HEK293 (cell line): ENCODE measurements at regions of chr19 and their contacts with region 1.

Region 1: DNA sequence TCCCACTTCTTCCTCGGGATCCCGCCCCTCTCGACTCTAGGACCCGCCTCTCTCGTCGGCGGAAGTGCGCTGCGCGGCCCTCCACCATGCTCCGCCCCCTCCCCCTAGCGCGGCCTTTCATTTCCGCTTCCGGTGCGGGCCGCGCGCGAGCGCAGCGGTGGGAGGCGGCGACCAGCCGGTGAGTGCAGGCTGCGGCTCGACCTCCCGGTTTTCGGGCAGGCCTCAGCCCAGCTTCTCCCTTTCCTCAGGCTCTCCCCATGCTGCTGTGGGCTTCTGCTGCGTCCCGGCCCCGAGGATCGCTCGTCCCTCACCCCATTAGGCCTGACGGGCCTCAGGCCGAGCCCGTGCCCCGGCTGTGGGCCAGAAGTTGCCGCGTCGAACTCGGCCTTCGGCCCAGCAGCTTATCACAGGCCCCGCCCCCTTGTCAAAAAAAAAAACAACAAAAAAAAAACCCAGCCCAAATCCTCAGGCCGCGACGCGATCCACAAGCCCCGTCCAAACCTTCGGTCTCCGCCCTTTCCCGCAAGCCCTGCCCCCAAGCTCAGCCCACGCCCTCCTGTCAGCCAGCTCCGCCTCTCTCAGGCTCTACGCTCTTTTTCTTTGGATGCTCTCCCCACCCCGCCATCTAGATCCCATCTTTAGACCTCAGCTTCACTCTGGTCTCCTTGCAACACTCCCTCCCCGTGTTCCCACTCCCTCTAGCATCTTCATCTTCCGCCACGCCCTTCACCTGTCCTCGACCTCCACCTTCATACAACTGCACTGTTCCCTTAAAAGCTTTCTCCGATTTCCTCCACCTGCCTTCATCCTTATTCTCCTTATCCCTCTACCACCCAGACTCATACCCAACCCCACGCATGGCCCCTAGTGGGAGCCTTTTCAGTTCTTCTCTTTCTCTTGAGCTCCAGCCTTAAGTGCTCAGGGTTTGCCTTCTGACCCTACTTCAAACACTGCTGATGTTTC is at the start of gene CLASRP:
- H3K4me3 ChIP-seq: peak within 1 kb of the TSS; percentile 96
- H3K27ac ChIP-seq: peak within 1 kb of the TSS; percentile 99
- H3K4me1 ChIP-seq: peaks cover 7% of the 10 kb centered on the region
- CTCF ChIP-seq: peak; percentile 57; the same call in 1 of the 2 replicates

Region 2: GRCh38 chr19:44972802-44973201 is 66.4 kb before region 1 on chr19:
- CTCF ChIA-PET with region 1: no interaction called
- POLR2A ChIA-PET with region 1: no interaction called
- H3K4me3 ChIP-seq: no peak overlapping the region
- H3K27ac ChIP-seq: no peak overlapping the region
- H3K4me1 ChIP-seq: no peaks in the 10 kb centered on the region
- CTCF ChIP-seq: no peak

Region 3: DNA sequence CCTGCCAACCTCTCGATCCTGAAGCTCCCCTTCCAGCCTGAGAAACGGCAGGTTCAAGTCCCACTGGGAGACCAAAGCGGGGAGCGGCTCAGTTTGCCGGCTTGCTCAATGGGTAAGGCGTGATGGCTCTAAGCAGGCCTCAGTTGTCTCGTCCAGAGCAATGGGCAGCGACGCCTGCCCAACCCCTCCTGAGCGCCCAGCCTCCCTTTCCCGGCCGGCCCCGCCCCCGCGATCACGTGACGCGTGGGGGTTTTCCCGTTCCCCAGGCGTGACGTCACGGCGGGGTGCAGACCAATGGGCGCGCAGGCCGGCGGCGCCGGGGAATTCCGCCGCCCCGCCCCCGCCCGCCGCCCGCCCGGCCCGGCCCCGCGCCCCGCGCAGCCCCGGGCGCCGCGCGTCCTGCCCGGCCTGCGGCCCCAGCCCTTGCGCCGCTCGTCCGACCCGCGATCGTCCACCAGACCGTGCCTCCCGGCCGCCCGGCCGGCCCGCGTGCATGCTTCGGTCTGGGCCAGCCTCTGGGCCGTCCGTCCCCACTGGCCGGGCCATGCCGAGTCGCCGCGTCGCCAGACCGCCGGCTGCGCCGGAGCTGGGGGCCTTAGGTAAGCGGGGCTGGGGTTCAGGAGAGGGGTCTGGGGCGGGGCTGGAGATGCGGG is 38.0 kb before region 1 on chr19 and contains the start of gene RELB:
- CTCF ChIA-PET with region 1: no interaction called
- POLR2A ChIA-PET with region 1: interaction called, 16 read pairs
- H3K4me3 ChIP-seq: peak within 1 kb of the TSS; percentile 69
- H3K27ac ChIP-seq: peak within 1 kb of the TSS; percentile 76
- H3K4me1 ChIP-seq: peaks cover 2% of the 10 kb centered on the region; the same call in 1 of the 2 replicates
- CTCF ChIP-seq: no peak

Region 4: GRCh38 chr19:45027371-45027770 is 11.8 kb before region 1 on chr19:
- CTCF ChIA-PET with region 1: interaction called, 3 read pairs
- POLR2A ChIA-PET with region 1: interaction called, 20 read pairs
- H3K4me3 ChIP-seq: no peak overlapping the region
- H3K27ac ChIP-seq: no peak overlapping the region
- H3K4me1 ChIP-seq: no peaks in the 10 kb centered on the region
- CTCF ChIP-seq: no peak

Region 5: DNA sequence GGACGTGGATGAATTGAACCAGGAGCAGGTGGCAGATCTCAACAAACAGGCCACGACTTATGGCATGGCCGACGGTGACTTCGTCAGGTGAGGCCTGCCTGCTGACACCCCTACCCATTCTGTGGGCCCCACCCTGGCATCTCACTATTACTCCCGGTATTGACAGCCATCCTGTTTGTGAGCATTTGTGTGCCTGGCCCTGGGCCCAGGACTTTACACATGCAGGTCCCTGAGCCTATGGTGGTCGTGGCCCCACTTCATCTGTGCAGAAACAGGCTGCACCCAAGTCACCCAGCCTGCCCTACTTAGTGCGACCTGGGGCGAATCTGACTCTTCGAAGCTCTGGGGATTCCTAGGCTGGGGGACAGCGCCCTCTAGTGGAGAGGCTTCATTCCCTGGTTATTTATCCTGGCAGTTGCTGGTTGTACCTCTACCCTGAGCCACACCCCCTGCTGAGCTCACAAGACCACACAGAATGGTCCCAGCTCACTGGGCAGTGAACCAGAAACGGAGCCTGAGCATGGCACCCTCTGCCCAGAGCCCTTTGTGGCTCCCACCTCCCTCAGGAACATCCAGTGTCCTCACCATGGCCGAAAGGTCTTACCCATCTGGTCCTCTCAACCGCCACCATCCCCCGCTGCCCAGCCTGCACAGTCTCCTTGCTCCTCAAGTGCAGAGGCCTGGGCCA is 20.2 kb after region 1 on chr19:
- CTCF ChIA-PET with region 1: interaction called, 65 read pairs
- POLR2A ChIA-PET with region 1: interaction called, 14 read pairs
- H3K4me3 ChIP-seq: no peak overlapping the region
- H3K27ac ChIP-seq: no peak overlapping the region
- H3K4me1 ChIP-seq: no peaks in the 10 kb centered on the region
- CTCF ChIP-seq: peak; percentile 81; the same call in 1 of the 2 replicates

Region 6: GRCh38 chr19:45178262-45179071 is 139.3 kb after region 1 on chr19 and contains the start of gene BLOC1S3:
- CTCF ChIA-PET with region 1: interaction called, 3 read pairs
- POLR2A ChIA-PET with region 1: interaction called, 23 read pairs
- H3K4me3 ChIP-seq: peak within 1 kb of the TSS; percentile 83
- H3K27ac ChIP-seq: peak within 1 kb of the TSS; percentile 85
- H3K4me1 ChIP-seq: peaks cover 8% of the 10 kb centered on the region
- CTCF ChIP-seq: peak; percentile 97